ENCODE measurements at regions of chr11 and their contacts with region 1.

Region 1: GRCh38 chr11:58059007-58059350 is 28.2 kb downstream of the OR6Q1 start:
- DNase-seq: peak; percentile 78
- H3K4me3 ChIP-seq: no peak overlapping the region
- H3K27ac ChIP-seq: peak overlapping the region; percentile 77
- H3K4me1 ChIP-seq: peaks cover 47% of the 10 kb centered on the region
- H3K27me3 ChIP-seq: no peaks in the 10 kb centered on the region
- CTCF ChIP-seq: no peak

Region 2: DNA sequence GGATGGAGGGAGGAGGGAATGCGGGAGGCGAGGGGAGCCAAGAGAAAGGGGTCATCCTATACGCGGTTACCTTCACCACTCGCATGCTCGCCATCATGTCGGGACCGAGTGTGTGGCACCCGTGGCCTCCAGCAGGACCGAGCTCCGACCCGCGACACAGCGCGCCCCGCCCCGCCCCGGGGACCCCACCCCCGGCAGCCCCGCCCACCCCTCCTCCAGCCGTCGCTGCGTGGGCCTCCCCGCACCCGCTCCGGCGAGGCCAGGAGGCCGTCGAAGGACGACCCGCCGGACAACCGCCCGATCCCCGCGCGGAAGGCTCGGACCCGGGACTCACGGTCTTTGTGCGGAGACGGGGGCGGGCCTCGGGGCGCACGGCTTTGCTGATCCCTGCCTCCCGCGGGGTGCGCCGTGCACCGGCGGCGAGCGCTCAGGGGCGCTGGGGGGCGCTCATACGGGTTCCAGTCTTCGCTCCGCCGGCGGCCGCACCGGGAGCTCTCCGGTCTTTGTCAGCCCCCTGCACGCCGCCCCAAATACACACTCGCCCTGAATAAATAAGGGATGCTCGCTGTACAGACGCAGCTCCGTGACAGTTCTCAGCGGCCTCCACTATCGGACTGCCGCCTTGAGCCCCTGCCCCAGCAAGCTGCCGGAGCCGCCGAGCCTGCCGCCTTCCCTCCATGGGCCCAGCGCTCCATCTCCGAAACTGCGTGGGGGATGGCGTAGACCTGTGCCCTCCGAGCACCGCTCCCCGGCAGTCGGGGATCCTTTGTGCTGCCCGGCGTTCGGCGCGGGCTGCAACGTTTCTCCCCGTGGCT is 491.3 kb before region 1 on chr11 and contains the start of gene UBE2L6:
- CTCF ChIA-PET with region 1: no interaction called
- dilution Hi-C with region 1: no loop called
- in situ Hi-C with region 1: no loop called
- intact Hi-C with region 1: loop called (anchors 10 kb)
- DNase-seq: no peak
- H3K4me3 ChIP-seq: peak within 1 kb of the TSS; percentile 77 to 96 (median 90)
- H3K27ac ChIP-seq: peak within 1 kb of the TSS; percentile 44
- H3K4me1 ChIP-seq: peaks cover 27% of the 10 kb centered on the region
- H3K27me3 ChIP-seq: no peaks in the 10 kb centered on the region
- CTCF ChIP-seq: no peak
- total RNA-seq, gene UBE2L6: 34.2 to 46.8 TPM

Region 3: GRCh38 chr11:57761301-57762234 is 297.4 kb before region 1 on chr11 and contains the start of gene CTNND1:
- CTCF ChIA-PET with region 1: no interaction called
- dilution Hi-C with region 1: no loop called
- in situ Hi-C with region 1: no loop called
- intact Hi-C with region 1: loop called (anchors 5 kb)
- DNase-seq: peak; percentile 97
- H3K4me3 ChIP-seq: peak within 1 kb of the TSS; percentile 51 to 98 (median 93)
- H3K27ac ChIP-seq: peak within 1 kb of the TSS; percentile 98
- H3K4me1 ChIP-seq: peaks cover 23% of the 10 kb centered on the region
- H3K27me3 ChIP-seq: no peaks in the 10 kb centered on the region
- CTCF ChIP-seq: peak in 1 of 2 donors; percentile 10
- total RNA-seq, gene CTNND1: 164 to 212 TPM

Region 4: GRCh38 chr11:57834852-57835251 is 224.1 kb before region 1 on chr11:
- CTCF ChIA-PET with region 1: no interaction called
- dilution Hi-C with region 1: no loop called
- in situ Hi-C with region 1: no loop called
- intact Hi-C with region 1: loop called (anchors 10 kb)
- DNase-seq: no peak
- H3K4me3 ChIP-seq: no peak overlapping the region
- H3K27ac ChIP-seq: no peak overlapping the region
- H3K4me1 ChIP-seq: no peaks in the 10 kb centered on the region
- H3K27me3 ChIP-seq: no peaks in the 10 kb centered on the region
- CTCF ChIP-seq: no peak

Region 5: GRCh38 chr11:58024601-58025091 is 34.3 kb before region 1 on chr11:
- CTCF ChIA-PET with region 1: no interaction called
- dilution Hi-C with region 1: no loop called
- in situ Hi-C with region 1: no loop called
- intact Hi-C with region 1: no loop called
- DNase-seq: no peak
- H3K4me3 ChIP-seq: no peak overlapping the region
- H3K27ac ChIP-seq: no peak overlapping the region
- H3K4me1 ChIP-seq: no peaks in the 10 kb centered on the region
- H3K27me3 ChIP-seq: no peaks in the 10 kb centered on the region
- CTCF ChIP-seq: no peak

Region 6: DNA sequence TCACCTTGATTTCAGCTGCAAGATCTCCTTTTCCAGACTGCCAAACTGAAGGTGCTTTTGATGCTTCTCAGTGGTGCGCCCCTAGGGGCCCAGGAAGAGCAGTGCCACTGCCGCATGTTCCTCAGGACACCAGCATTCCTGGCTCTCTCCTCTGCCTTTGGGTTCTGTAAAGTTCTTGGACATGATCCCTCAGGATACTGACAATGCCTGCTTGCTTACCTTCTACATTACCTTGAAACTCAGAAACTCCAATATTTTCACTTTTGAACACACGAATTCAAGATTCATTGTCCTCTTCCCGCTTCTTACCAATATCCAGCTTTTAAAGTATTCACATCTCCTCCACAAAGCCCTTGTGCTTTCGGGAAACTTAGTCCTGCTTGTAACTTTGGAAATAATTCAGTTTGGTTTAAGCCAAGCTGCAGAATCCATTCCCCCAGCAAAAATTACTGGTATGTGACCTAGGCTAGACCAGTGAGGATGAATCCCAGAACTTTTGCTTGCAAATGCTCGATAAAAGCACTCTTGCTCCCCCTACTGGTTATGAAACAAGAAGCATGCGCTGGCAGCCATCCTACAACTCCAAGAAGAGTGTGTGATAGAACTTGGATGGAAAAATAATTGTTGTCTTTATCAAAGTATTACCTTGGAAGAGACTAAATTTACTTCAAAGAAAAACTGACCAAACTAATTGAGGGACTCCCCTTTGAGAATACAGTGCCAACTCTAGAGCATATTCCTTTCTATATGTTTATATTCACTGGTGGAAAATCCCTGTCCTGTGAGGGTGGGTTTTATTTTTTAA is 465.5 kb after region 1 on chr11:
- CTCF ChIA-PET with region 1: no interaction called
- dilution Hi-C with region 1: no loop called
- in situ Hi-C with region 1: loop called in 1 of 2 experiments (anchors 25 kb)
- intact Hi-C with region 1: no loop called
- DNase-seq: peak; percentile 63
- H3K4me3 ChIP-seq: no peak overlapping the region
- H3K27ac ChIP-seq: no peak overlapping the region
- H3K4me1 ChIP-seq: peaks cover 3% of the 10 kb centered on the region
- H3K27me3 ChIP-seq: no peaks in the 10 kb centered on the region
- CTCF ChIP-seq: peak; percentile 90 to 98

Measured in mammary epithelial cell (primary cell).